Activated B cell treated with CpG ODN at 0.5 μM for 24 hours (primary cell): ENCODE measurements at regions of chr19 and their contacts with region 1.

Region 1: DNA sequence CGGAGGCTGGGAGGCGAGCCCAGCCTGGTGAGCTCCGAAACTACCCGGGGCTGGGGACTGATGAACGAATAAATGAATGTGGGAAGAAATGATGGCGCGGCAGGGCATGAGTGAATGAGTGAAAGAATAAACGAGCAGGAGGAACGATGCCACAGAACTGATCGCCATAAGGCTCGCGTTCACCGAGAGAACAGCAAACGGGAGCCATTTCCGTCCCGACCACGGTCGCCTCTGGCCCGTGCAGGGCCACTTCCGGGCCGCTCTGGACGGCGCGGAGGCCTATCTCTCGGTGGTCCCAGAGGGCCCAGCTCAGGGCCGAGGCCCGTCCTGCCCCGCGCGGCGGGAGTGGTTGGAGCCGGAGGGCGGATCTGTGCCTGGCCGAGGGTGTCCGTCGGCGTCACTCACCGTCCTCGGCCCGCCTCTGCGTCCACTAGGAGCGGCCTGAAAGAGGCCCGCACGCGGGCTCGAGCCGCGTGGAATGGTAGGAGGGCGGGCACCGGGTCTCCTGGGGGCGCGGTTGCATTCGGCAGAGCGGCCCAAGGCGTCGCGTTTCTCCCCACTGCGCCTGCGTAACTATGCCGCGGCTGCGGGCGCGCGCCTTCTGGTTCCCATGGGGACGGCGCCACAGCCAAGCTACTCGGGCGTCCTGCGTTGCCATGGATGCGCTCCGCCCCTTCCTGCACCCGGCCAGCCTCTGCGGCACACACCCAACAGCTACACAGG is at the start of gene ZNF497:
- DNase-seq: peak; percentile 98
- ATAC-seq: peak; percentile 86
- H3K4me3 Mint-ChIP-seq: peak within 1 kb of the TSS; percentile 95
- H3K27ac Mint-ChIP-seq: peak within 1 kb of the TSS; percentile 97
- H3K4me1 Mint-ChIP-seq: peaks cover 21% of the 10 kb centered on the region
- H3K27me3 Mint-ChIP-seq: peaks cover 2% of the 10 kb centered on the region
- CTCF ChIP-seq: no peak
- total RNA-seq, gene ZNF497: 1.7 and 2.1 TPM in 2 replicates

Region 2: DNA sequence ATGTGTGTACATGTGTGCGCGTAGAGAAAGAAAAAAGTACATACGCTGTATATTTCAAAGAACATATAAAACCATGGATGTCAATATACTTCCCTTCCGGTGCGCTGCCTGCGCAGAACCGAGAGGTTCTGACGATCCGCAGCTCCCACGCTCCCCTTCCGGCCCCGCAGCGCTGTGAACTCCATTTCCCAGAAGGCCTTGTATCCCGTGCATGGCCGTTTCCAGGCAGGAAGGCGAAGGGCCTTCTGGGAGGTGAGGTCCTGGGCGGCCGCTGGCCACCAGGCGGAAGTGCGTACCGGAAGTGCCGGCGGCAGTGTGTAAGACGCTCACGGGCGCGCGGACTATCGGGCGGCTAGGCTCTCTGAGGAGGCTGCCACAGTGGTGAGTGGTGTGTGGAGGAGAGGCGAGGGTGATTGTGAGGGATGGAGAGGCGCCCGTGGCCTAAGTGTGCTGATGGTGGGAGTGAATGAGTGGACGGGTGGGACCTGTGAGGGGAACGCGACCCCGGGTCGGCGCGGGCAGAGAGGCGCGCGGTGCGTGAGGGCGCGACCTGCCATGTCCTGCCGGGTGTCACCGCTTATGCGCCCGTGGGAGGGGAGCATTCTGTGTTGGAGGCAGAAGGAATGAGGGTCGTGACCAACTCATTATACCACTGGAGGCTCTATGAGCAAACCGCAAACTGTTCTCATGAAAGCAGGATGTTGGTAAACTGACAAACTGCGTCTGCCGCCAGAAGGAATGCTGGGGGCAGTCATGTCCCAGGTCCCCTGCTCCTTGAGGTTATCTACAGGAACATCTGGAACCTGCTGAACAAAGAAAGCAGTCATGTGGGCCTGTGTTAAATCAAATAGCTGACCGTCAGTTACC is 57.1 kb before region 1 on chr19 and contains the start of gene ERVK3-1:
- CTCF ChIA-PET with region 1: no interaction called
- POLR2A ChIA-PET with region 1: interaction called, 23 read pairs
- intact Hi-C with region 1: loop called (anchors 1 kb)
- DNase-seq: peak; percentile 89
- ATAC-seq: peak; percentile 97
- H3K4me3 Mint-ChIP-seq: peak within 1 kb of the TSS; percentile 100
- H3K27ac Mint-ChIP-seq: peak within 1 kb of the TSS; percentile 98
- H3K4me1 Mint-ChIP-seq: peaks cover 38% of the 10 kb centered on the region
- H3K27me3 Mint-ChIP-seq: no peaks in the 10 kb centered on the region
- CTCF ChIP-seq: no peak
- total RNA-seq, gene ERVK3-1: 61.4 and 74.3 TPM in 2 replicates

Region 3: DNA sequence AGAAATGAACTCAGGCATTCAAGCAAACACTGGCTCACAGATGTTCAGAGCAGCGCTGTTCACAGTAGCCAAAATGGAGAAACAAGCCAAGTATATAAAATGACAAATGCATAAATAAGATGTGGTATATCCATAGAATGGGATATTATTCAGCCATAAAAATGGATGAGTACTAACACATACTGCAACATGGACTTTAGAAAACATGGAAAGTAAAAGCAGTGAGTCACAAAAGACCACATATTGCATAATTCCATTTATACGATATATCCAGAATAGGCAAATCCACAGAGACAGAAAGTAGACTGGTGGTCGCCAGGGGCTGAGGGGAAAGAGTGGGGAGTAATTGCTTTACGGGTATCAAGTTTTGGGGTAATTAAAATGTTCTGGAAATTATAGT is 11.8 kb after region 1 on chr19:
- CTCF ChIA-PET with region 1: interaction called, 3 read pairs
- POLR2A ChIA-PET with region 1: interaction called, 89 read pairs
- intact Hi-C with region 1: no loop called
- DNase-seq: no peak
- ATAC-seq: no peak
- H3K4me3 Mint-ChIP-seq: no peak overlapping the region
- H3K27ac Mint-ChIP-seq: no peak overlapping the region
- H3K4me1 Mint-ChIP-seq: peaks cover 6% of the 10 kb centered on the region
- H3K27me3 Mint-ChIP-seq: no peaks in the 10 kb centered on the region
- CTCF ChIP-seq: no peak

Region 4: GRCh38 chr19:58400916-58401839 is 38.7 kb after region 1 on chr19:
- CTCF ChIA-PET with region 1: interaction called, 3 read pairs
- POLR2A ChIA-PET with region 1: interaction called, 6 read pairs
- intact Hi-C with region 1: loop called (anchors 1 kb)
- DNase-seq: peak; percentile 96
- ATAC-seq: peak; percentile 96
- H3K4me3 Mint-ChIP-seq: peak overlapping the region; percentile 92
- H3K27ac Mint-ChIP-seq: peak overlapping the region; percentile 90
- H3K4me1 Mint-ChIP-seq: peaks cover 12% of the 10 kb centered on the region
- H3K27me3 Mint-ChIP-seq: peaks cover 7% of the 10 kb centered on the region
- CTCF ChIP-seq: no peak

Region 5: GRCh38 chr19:58466760-58467589 is 104.5 kb after region 1 on chr19 and contains the start of gene ZNF324:
- CTCF ChIA-PET with region 1: no interaction called
- POLR2A ChIA-PET with region 1: interaction called, 7 read pairs
- intact Hi-C with region 1: loop called (anchors 2 kb)
- DNase-seq: peak; percentile 95
- ATAC-seq: peak; percentile 92
- H3K4me3 Mint-ChIP-seq: peak within 1 kb of the TSS; percentile 81
- H3K27ac Mint-ChIP-seq: peak within 1 kb of the TSS; percentile 56
- H3K4me1 Mint-ChIP-seq: peaks cover 26% of the 10 kb centered on the region
- H3K27me3 Mint-ChIP-seq: no peaks in the 10 kb centered on the region
- CTCF ChIP-seq: no peak
- total RNA-seq, gene ZNF324: 11.8 and 13.1 TPM in 2 replicates

Region 6: DNA sequence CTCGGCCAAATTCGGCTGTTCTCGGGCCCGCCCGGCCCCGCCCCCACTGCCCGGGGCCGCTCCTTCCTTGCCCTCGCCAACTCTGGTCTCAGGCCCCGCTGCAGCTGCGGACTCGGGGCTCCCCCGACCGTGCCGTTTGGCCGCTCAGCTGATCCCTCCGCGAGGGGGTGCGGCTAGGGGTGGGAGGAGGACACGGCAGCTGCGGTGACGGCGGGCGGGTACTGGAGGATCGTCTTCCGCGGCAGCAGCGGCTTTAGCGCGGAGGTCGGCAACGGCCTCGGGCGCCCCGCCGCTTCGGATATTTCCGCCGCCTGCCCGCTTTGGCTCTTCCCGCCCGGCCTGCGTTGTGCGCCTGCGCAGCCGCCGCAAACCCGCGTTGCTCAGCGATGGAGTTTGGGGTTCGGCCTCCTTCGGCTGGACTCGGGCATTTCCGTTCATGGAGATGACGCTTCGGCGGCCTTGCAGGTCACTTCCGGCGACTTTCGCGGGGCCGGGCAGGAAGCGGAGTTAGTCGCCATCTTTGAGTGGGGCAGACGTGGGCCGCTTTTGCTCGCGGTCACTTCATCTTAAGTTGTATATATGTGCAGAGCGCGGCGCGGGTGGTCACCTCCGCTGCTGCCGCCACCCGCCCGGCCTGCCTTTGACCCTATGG is 196.3 kb after region 1 on chr19:
- CTCF ChIA-PET with region 1: no interaction called
- POLR2A ChIA-PET with region 1: interaction called, 18 read pairs
- intact Hi-C with region 1: no loop called
- DNase-seq: peak; percentile 97
- ATAC-seq: peak; percentile 72
- H3K4me3 Mint-ChIP-seq: peak overlapping the region; percentile 97
- H3K27ac Mint-ChIP-seq: peak overlapping the region; percentile 97
- H3K4me1 Mint-ChIP-seq: peaks cover 82% of the 10 kb centered on the region
- H3K27me3 Mint-ChIP-seq: no peaks in the 10 kb centered on the region
- CTCF ChIP-seq: no peak